Sigmoid colon (tissue), 7 donors: ENCODE measurements at regions of chr14 and their contacts with region 1.

Region 1: GRCh38 chr14:100246826-100247428 is 8.0 kb downstream of the YY1 start:
- DNase-seq: no peak
- H3K4me3 ChIP-seq: no peak overlapping the region
- H3K27ac ChIP-seq: peak overlapping the region in 3 of 4 donors; percentile 42 to 61 (median 51)
- H3K4me1 ChIP-seq: peaks cover 0 to 84% (median 74%) of the 10 kb centered on the region in 4 donors
- H3K27me3 ChIP-seq: no peaks in the 10 kb centered on the region
- CTCF ChIP-seq: peak in 3 of 4 experiments; percentile 45 to 51 (median 50)
- EP300 ChIP-seq: no peak
- POLR2A ChIP-seq: no peak

Region 2: GRCh38 chr14:100104523-100105300 is 142.2 kb before region 1 on chr14:
- intact Hi-C with region 1: no loop called
- DNase-seq: peak; percentile 55
- H3K4me3 ChIP-seq: no peak overlapping the region
- H3K27ac ChIP-seq: peak overlapping the region; percentile 22 to 77 (median 56)
- H3K4me1 ChIP-seq: peaks cover 0 to 63% (median 52%) of the 10 kb centered on the region in 4 donors
- H3K27me3 ChIP-seq: no peaks in the 10 kb centered on the region
- CTCF ChIP-seq: no peak
- EP300 ChIP-seq: peak in 2 of 4 donors; percentile 17 to 38
- POLR2A ChIP-seq: no peak

Region 3: DNA sequence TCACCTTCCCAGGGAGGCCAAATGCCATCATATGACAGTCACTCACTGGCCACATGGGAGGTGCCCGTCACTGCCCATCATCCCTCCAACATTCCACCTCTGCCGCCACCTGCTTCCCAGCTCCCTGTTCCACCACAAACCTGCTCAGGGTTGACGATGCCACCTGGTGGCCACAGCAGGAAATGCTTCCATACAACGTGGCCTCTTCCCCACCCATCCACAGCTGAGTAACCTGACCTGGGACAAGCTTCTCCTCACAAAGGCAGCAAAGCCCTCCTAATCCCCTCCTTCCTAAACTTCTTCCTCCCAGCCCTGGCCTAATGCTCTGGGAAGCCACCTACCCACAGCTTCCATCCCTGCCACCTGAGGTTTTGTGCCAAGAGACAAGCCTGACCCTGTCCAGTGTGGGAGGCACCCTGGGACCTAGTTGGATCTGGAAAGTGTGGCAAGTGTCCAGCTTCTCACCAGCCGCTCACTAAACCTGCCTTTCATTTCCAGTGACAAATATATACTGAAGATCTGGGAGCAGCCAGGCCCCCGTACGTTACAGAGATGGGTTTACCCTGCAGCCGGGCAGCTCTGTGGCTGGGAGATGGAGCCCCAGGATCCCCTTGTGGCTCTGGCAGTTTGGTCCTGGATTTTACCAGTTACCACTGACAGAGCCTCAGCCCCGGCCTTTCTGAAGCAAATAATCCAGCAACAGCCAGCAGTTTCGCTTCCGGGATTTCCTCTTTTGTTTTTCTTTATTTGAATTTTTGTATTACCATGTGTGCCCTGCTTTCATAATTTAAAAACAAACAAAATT is 91.7 kb before region 1 on chr14:
- intact Hi-C with region 1: no loop called
- DNase-seq: no peak
- H3K4me3 ChIP-seq: no peak overlapping the region
- H3K27ac ChIP-seq: no peak overlapping the region
- H3K4me1 ChIP-seq: peaks cover 0 to 16% (median 15%) of the 10 kb centered on the region in 4 donors
- H3K27me3 ChIP-seq: peaks cover 20 to 70% (median 38%) of the 10 kb centered on the region in 3 donors
- CTCF ChIP-seq: peak in 1 of 4 experiments; percentile 20
- EP300 ChIP-seq: no peak
- POLR2A ChIP-seq: no peak

Region 4: GRCh38 chr14:100285021-100285912 is 38.3 kb after region 1 on chr14:
- intact Hi-C with region 1: loop called (anchors 2 kb)
- DNase-seq: no peak
- H3K4me3 ChIP-seq: peak overlapping the region; percentile 71 to 85 (median 82)
- H3K27ac ChIP-seq: peak overlapping the region; percentile 90 to 92 (median 91)
- H3K4me1 ChIP-seq: peaks cover 3 to 20% (median 14%) of the 10 kb centered on the region in 4 donors
- H3K27me3 ChIP-seq: no peaks in the 10 kb centered on the region
- CTCF ChIP-seq: peak; percentile 76 to 94 (median 84)
- EP300 ChIP-seq: no peak
- POLR2A ChIP-seq: no peak